ENCODE measurements at regions of chr20 and their contacts with region 1.

Region 1: DNA sequence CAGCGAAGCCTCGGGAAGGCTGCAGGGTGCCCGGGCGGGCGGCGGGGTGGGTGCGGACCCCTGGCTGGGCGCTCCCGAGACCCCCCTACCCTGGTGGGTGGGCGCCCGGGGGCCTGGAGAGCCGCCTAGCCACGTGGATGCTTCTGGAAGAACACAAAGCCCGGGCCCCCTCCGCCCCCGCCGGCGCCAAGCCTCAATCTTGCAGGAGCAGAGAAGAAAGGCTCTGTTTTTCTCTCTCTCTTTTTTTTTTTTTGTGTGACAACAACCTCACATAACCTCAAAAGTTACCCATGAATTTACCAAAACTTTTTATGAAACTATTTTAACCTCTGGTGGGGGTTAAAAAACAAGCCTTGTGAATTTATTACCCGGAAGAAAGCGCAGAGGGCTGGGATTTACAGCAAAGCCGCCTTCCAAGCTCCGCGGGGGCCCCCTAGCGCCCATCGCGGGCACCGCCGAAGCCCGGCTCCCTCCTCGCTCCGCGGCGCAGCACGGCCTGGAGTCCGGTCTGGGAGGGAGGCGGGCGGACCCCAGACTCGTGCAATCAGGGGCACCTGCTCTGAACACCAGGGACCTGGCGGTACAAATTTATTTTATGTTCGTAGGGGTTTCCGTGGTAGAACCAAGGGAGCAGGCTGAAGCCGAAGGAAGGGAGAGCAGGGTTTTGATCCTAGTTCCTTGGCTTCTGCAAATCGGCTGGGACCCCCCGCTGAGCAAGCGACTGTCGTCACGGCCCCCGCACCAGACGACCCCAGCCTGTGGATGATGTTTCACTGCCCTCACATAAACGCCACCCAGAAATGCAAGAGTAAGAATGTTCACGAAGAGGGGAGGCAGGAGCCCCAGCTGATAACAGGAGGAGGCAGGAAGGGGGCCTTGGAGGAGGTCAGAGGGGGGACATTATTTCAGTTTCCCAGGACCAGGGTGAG is 58.9 kb downstream of the ZNF831 start:
- DNase-seq: peak; percentile 84
- ATAC-seq: peak; percentile 97
- H3K4me3 Mint-ChIP-seq: peak overlapping the region; percentile 84
- H3K27ac Mint-ChIP-seq: no peak overlapping the region
- H3K4me1 Mint-ChIP-seq: peaks cover 11% of the 10 kb centered on the region
- H3K27me3 Mint-ChIP-seq: peaks cover 9% of the 10 kb centered on the region
- CTCF ChIP-seq: peak; percentile 83

Region 2: GRCh38 chr20:58236612-58237330 is 985.7 kb before region 1 on chr20:
- CTCF ChIA-PET with region 1: no interaction called
- POLR2A ChIA-PET with region 1: no interaction called
- intact Hi-C with region 1: loop called (anchors 1 kb)
- DNase-seq: peak; percentile 75
- ATAC-seq: peak; percentile 92
- H3K4me3 Mint-ChIP-seq: peak overlapping the region; percentile 93
- H3K27ac Mint-ChIP-seq: peak overlapping the region; percentile 87
- H3K4me1 Mint-ChIP-seq: peaks cover 7% of the 10 kb centered on the region
- H3K27me3 Mint-ChIP-seq: no peaks in the 10 kb centered on the region
- CTCF ChIP-seq: no peak

Region 3: GRCh38 chr20:58870239-58871014 is 352.1 kb before region 1 on chr20:
- CTCF ChIA-PET with region 1: interaction called, 29 read pairs
- POLR2A ChIA-PET with region 1: no interaction called
- intact Hi-C with region 1: loop called (anchors 1 kb)
- DNase-seq: peak; percentile 37
- ATAC-seq: peak; percentile 84
- H3K4me3 Mint-ChIP-seq: no peak overlapping the region
- H3K27ac Mint-ChIP-seq: peak overlapping the region; percentile 41
- H3K4me1 Mint-ChIP-seq: peaks cover 11% of the 10 kb centered on the region
- H3K27me3 Mint-ChIP-seq: no peaks in the 10 kb centered on the region
- CTCF ChIP-seq: peak; percentile 83

Region 4: DNA sequence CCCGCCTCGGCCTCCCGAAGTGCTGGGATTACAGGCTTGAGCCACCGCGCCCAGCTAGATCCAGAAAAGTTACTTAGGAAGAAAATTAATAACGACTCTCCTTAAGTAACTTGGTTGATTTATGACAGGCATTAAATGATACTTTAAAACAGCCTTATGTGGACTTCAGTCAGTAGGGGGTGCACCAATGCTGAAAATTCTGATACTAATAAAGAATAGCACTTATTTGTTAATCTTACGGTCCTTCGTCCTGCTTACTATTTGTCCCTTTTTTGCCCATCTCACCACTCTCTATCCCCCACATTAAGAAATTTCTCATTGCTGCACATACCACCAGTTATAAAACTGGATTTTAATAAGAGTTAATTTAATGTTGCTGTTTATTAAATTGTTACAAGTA is 167.2 kb before region 1 on chr20:
- CTCF ChIA-PET with region 1: interaction called, 5 read pairs
- POLR2A ChIA-PET with region 1: no interaction called
- intact Hi-C with region 1: loop called (anchors 1 kb)
- DNase-seq: no peak
- ATAC-seq: no peak
- H3K4me3 Mint-ChIP-seq: no peak overlapping the region
- H3K27ac Mint-ChIP-seq: no peak overlapping the region
- H3K4me1 Mint-ChIP-seq: no peaks in the 10 kb centered on the region
- H3K27me3 Mint-ChIP-seq: peaks cover 31% of the 10 kb centered on the region
- CTCF ChIP-seq: no peak

Region 5: GRCh38 chr20:59207742-59208357 is 14.7 kb before region 1 on chr20:
- CTCF ChIA-PET with region 1: interaction called, 10 read pairs
- POLR2A ChIA-PET with region 1: no interaction called
- intact Hi-C with region 1: loop called (anchors 1 kb)
- DNase-seq: peak; percentile 59
- ATAC-seq: peak; percentile 100
- H3K4me3 Mint-ChIP-seq: no peak overlapping the region
- H3K27ac Mint-ChIP-seq: peak overlapping the region; percentile 30
- H3K4me1 Mint-ChIP-seq: peaks cover 6% of the 10 kb centered on the region
- H3K27me3 Mint-ChIP-seq: no peaks in the 10 kb centered on the region
- CTCF ChIP-seq: no peak

Region 6: DNA sequence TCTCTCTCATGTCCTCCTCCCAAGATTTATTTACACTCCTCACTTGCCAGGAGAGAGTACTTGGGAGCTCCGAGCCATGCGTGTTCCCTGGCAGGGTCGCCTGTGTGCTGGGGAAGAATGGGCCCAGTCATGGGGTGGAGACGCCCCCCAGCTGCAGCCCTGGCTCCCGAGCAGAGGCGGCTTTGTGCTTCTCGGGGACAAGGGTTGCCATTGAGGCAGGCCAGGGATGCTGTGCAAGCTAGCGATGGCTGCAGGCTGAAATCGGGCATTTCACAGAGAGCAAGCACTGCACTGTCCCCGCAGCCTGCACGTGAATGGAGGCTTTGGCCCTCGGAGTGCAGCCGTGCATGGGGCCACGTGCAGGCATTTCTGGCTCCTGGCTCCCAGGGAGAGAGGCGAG is 405.7 kb after region 1 on chr20:
- CTCF ChIA-PET with region 1: no interaction called
- POLR2A ChIA-PET with region 1: no interaction called
- intact Hi-C with region 1: no loop called
- DNase-seq: no peak
- ATAC-seq: no peak
- H3K4me3 Mint-ChIP-seq: no peak overlapping the region
- H3K27ac Mint-ChIP-seq: no peak overlapping the region
- H3K4me1 Mint-ChIP-seq: no peaks in the 10 kb centered on the region
- H3K27me3 Mint-ChIP-seq: no peaks in the 10 kb centered on the region
- CTCF ChIP-seq: no peak

Region 7: DNA sequence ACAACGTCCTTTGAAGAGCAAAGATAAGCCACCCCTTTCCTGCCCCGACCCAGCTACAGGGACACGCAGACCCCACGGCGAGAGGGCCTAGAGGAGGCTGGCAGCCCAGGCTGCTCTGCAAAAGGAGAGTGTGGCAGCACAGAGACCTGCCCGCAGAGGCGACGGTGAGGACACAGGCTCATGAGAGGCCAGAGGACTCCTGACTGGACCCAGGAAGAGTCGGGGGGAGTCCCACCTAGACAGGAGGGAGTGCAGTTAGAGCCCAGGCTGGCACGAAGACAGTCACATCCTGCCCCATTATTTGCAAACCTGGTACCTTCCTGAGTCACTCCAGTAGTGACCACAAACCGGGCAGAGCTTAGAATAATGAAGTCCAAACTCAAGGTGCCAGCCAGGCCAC is 1801.9 kb after region 1 on chr20:
- CTCF ChIA-PET with region 1: no interaction called
- POLR2A ChIA-PET with region 1: no interaction called
- intact Hi-C with region 1: no loop called
- DNase-seq: no peak
- ATAC-seq: no peak
- H3K4me3 Mint-ChIP-seq: no peak overlapping the region
- H3K27ac Mint-ChIP-seq: no peak overlapping the region
- H3K4me1 Mint-ChIP-seq: no peaks in the 10 kb centered on the region
- H3K27me3 Mint-ChIP-seq: no peaks in the 10 kb centered on the region
- CTCF ChIP-seq: no peak

Measured in activated B cell treated with CpG ODN at 0.5 μM for 24 hours (primary cell).